Activated naive CD4-positive, alpha-beta T cell treated with anti-CD3 and anti-CD28 coated beads, Interleukin-2, amount 10 ng/mL, durations not matched to agents 7 days and 5 days (primary cell): ENCODE measurements at regions of chr9 and their contacts with region 1.

Region 1: GRCh38 chr9:15416880-15417279 is 5.8 kb upstream of the SNAPC3 start:
- DNase-seq: peak; percentile 60
- H3K4me3 Mint-ChIP-seq: no peak overlapping the region
- H3K27ac Mint-ChIP-seq: no peak overlapping the region
- H3K4me1 Mint-ChIP-seq: peaks cover 6% of the 10 kb centered on the region
- H3K27me3 Mint-ChIP-seq: peaks cover 25% of the 10 kb centered on the region

Region 2: DNA sequence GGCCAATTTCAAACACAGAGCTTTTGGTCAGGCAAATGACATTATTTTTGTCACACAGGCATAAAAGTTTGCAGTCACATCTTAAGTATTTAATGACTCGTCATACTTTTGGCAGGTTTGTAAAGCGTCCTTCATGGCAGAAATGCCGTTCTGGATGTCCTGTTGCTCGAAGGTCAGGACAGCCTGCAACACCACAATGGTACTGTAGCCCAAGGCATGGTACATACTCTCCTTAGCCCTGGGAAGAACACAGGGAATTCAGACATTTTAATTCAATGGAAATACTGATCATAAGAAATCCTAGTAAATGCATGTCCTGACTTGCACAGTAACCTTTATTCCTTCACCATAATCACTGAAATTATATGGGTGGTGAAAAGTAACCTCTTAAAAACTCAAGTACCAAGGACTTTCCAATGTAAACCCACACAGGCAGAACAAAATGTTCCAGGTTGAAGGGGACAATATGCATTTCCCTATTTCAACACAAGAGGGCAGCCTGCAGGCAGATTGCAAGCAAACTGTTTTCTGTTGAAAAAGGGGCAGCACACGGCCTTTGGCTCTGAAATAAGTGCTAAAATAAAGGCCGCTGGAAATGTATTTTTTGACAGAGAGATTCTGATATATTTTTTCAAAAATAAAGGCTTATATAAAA is 205.6 kb before region 1 on chr9:
- CTCF ChIA-PET with region 1: interaction called, 14 read pairs
- DNase-seq: peak; percentile 59
- H3K4me3 Mint-ChIP-seq: no peak overlapping the region
- H3K27ac Mint-ChIP-seq: no peak overlapping the region
- H3K4me1 Mint-ChIP-seq: no peaks in the 10 kb centered on the region
- H3K27me3 Mint-ChIP-seq: no peaks in the 10 kb centered on the region

Region 3: GRCh38 chr9:15354713-15355112 is 62.2 kb before region 1 on chr9:
- CTCF ChIA-PET with region 1: interaction called, 11 read pairs
- DNase-seq: no peak
- H3K4me3 Mint-ChIP-seq: no peak overlapping the region
- H3K27ac Mint-ChIP-seq: no peak overlapping the region
- H3K4me1 Mint-ChIP-seq: peaks cover 31% of the 10 kb centered on the region
- H3K27me3 Mint-ChIP-seq: no peaks in the 10 kb centered on the region

Region 4: DNA sequence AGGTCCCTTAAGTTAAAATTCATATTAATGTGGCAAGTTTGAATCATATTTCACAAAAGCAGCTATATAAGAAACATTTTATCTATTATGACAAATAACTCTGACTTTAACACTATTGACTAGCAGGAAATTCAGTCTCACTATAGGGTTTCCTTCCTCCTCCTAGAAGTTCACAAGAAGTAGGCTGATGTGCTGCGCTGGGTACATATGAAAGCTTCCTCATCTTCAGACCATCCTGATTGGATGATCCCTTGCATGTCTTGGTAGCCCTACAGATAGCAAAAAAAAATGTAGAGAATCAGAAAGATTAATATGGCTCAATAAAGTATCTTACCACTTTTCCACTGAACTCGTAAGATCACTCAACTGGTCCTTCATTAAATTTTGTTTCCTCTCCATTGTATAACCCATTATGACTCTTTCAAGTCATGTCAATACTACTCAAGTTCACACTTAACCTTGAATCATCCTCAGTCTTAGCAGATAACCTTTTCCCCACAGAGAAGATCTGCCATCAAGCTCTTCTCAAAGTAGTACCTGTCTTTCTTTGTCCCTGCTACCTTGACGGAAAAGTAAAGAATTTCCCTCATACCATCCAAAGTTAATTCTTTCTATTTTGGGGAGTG is 105.4 kb after region 1 on chr9:
- CTCF ChIA-PET with region 1: no interaction called
- DNase-seq: no peak
- H3K4me3 Mint-ChIP-seq: no peak overlapping the region
- H3K27ac Mint-ChIP-seq: no peak overlapping the region
- H3K4me1 Mint-ChIP-seq: no peaks in the 10 kb centered on the region
- H3K27me3 Mint-ChIP-seq: peaks cover 15% of the 10 kb centered on the region